K562 (cell line): ENCODE measurements at regions of chr11 and their contacts with region 1.

Region 1: DNA sequence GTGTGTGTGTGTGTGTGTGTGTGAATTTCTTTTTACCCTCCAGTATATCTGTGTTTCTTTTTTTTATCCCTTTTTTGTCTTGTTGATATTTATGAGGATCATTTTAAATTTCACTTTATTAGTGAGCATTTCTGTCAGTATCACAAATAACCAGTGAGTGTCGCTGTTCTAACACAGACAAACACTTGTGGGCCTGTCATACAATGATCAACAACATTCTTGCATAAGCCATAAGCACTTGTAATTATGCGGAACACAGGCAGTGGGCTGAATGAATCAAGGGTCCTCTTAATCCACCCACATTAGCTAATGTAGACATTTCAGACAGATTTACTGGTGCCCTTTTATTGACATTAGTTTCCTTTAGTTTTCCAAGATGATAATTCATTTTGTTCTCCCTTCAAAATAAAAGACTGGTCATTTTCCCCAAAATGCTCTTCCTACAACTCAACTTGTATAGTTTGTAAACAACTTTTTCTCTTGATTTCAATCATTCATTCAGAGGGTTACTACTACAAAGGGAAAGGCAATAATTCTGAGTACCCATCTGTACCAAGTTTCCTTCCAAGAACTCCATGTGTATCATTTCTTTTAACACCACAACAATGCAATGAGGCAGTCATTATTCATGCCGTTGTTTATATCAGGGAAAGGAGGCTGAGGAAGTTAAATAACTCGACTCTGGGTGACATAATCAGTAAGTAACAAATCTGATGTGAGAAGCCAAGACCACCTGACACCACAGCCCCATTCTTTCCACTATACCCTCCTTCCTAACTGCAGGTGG is 34.5 kb upstream of the ANO3 start:
- DNase-seq: peak; percentile 5 to 29 (median 10)
- ATAC-seq: no peak
- H3K4me3 ChIP-seq: no peak overlapping the region
- H3K27ac ChIP-seq: no peak overlapping the region
- H3K4me1 ChIP-seq: no peaks in the 10 kb centered on the region
- H3K27me3 ChIP-seq: no peaks in the 10 kb centered on the region
- CTCF ChIP-seq: peak in 2 of 3 experiments; percentile 43 to 48; a peak in 4 of 6 replicates
- EP300 ChIP-seq: no peak
- POLR2A ChIP-seq: no peak
- RAD21 ChIP-seq: peak; percentile 55 to 67; a peak in 3 of 4 replicates

Region 2: DNA sequence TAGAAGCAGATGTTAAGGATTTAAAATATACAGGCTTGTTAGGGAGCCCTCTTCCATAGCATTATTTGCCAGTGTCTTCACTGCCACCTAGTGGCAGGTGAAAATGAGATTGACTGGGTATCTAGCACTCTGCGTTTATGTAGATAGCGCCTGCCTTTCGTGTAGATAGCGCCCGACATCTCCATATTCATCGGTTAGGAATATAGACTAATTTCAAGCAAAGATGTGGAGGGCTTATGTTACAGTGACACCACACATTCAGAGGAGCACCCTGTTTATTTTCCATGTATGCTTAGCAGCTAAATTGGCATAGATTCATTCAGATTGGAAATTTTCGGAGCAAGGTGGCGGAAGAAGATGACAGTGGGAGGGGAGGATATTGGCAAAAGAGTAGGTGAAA is 352.5 kb after region 1 on chr11:
- CTCF ChIA-PET with region 1: no interaction called
- POLR2A ChIA-PET with region 1: no interaction called
- in situ Hi-C with region 1: no loop called
- intact Hi-C with region 1: loop called (anchors 5 kb)
- DNase-seq: peak; percentile 29 to 69 (median 35)
- ATAC-seq: peak; percentile 88
- H3K4me3 ChIP-seq: no peak overlapping the region
- H3K27ac ChIP-seq: no peak overlapping the region
- H3K4me1 ChIP-seq: no peaks in the 10 kb centered on the region
- H3K27me3 ChIP-seq: no peaks in the 10 kb centered on the region
- CTCF ChIP-seq: peak; percentile 24 to 60 (median 56); a peak in 5 of 6 replicates
- EP300 ChIP-seq: no peak
- POLR2A ChIP-seq: no peak
- RAD21 ChIP-seq: peak; percentile 65 to 71

Region 3: GRCh38 chr11:26830757-26831156 is 533.4 kb after region 1 on chr11:
- CTCF ChIA-PET with region 1: no interaction called
- POLR2A ChIA-PET with region 1: no interaction called
- in situ Hi-C with region 1: loop called (anchors 10 kb)
- intact Hi-C with region 1: no loop called
- DNase-seq: no peak
- ATAC-seq: no peak
- H3K4me3 ChIP-seq: no peak overlapping the region
- H3K27ac ChIP-seq: no peak overlapping the region
- H3K4me1 ChIP-seq: no peaks in the 10 kb centered on the region
- H3K27me3 ChIP-seq: no peaks in the 10 kb centered on the region
- CTCF ChIP-seq: no peak
- EP300 ChIP-seq: no peak
- POLR2A ChIP-seq: no peak
- RAD21 ChIP-seq: no peak

Region 4: GRCh38 chr11:27158722-27159679 is 861.6 kb after region 1 on chr11:
- CTCF ChIA-PET with region 1: no interaction called
- POLR2A ChIA-PET with region 1: no interaction called
- in situ Hi-C with region 1: loop called (anchors 5 kb)
- intact Hi-C with region 1: loop called (anchors 1 kb)
- DNase-seq: peak; percentile 39 to 65 (median 50)
- ATAC-seq: peak; percentile 84
- H3K4me3 ChIP-seq: no peak overlapping the region
- H3K27ac ChIP-seq: no peak overlapping the region
- H3K4me1 ChIP-seq: no peaks in the 10 kb centered on the region
- H3K27me3 ChIP-seq: no peaks in the 10 kb centered on the region
- CTCF ChIP-seq: peak; percentile 61 to 73 (median 71)
- EP300 ChIP-seq: no peak
- POLR2A ChIP-seq: no peak
- RAD21 ChIP-seq: peak; percentile 72 to 81